ENCODE measurements at regions of chr16 and their contacts with region 1.

Region 1: DNA sequence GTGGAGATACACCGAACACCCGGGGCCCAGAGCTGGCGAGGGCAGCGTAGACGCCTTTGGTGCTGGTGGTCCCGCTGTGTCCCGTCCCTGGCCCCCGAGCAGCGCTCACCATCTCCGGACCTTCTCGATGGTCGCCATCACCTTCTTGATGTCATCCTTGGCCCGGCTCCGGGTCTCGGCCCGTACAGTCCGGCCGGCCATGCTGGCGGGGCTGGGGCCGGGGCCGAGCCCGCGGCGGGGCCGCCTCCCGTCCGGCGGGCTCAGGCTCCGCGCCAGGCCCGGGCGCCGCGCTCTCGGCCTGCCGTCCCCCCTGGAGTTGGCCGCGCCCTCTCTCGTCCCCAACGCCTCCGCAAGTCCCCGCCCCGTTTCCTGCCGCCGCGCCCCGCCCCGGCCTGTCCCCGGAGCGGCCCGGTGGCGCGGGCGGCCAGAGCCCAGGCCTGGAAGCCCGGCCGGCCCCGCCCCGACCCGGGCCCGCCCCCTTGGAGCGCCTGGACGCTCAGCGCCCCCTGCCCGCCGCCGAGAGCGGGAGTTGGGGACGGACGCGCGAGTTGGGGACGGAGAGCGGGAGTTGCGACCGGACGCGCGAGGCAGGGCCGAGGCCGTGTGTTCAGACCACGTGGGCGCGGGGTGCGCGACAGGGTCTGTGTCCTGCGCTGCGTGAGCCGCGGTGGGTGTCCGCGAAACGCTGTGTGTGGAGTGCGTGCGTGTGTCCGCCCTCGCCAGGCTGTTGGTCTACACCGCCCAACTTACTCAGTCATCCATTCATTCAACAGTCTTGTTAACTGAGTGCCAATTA is at the start of gene BCL7C:
- DNase-seq: peak; percentile 86
- ATAC-seq: peak; percentile 89
- H3K4me3 Mint-ChIP-seq: peak within 1 kb of the TSS; percentile 88
- H3K27ac Mint-ChIP-seq: peak within 1 kb of the TSS; percentile 85
- H3K4me1 Mint-ChIP-seq: peaks cover 42% of the 10 kb centered on the region
- H3K27me3 Mint-ChIP-seq: no peaks in the 10 kb centered on the region
- total RNA-seq, gene BCL7C: 30.3 to 34.5 TPM

Region 2: DNA sequence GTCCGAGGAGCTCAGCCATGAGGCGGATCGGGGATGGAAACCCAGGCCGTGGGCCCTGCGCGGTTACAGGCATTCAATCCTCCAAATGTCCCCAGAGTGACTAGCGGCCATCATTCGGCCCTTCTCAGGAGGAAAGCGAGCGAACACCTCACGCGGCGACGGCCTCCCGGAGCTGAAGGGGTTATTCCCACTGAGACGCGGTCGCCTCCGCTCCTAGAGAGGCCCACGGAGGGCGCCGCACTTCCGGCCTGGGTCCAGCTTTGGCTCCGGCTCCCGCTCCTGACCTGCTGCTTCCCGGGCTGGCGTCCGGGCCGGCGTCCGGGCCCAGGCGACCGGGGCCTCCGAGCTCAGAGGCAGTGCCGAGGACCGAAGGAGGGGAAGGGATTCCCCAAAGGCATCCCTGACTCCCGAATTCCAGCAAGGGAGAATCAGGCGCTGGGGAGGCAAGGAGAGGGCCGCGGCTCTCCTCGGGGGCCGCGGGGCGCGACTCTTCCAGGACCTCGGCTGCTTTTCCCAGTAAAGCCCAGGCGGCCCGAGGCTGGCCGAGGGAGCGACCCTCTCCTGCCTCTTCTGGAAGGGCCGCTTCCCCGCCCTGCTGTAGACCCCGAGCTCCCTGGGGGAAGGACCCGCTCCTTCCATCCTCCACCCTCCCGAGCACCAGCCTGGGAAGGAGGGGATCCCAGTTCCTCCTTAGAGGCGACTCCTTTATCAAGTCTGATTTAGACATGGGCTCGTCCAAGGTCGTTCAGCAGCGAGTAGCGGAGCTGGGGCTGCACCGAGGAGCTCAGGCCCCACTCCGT is 88.4 kb before region 1 on chr16:
- CTCF ChIA-PET with region 1: no interaction called
- POLR2A ChIA-PET with region 1: no interaction called
- DNase-seq: peak; percentile 34
- ATAC-seq: peak; percentile 71
- H3K4me3 Mint-ChIP-seq: peak overlapping the region; percentile 57
- H3K27ac Mint-ChIP-seq: peak overlapping the region; percentile 28
- H3K4me1 Mint-ChIP-seq: peaks cover 29% of the 10 kb centered on the region
- H3K27me3 Mint-ChIP-seq: peaks cover 9% of the 10 kb centered on the region

Region 3: GRCh38 chr16:30858829-30859423 is 35.0 kb before region 1 on chr16:
- CTCF ChIA-PET with region 1: no interaction called
- POLR2A ChIA-PET with region 1: no interaction called
- DNase-seq: no peak
- ATAC-seq: no peak
- H3K4me3 Mint-ChIP-seq: no peak overlapping the region
- H3K27ac Mint-ChIP-seq: no peak overlapping the region
- H3K4me1 Mint-ChIP-seq: peaks cover 3% of the 10 kb centered on the region
- H3K27me3 Mint-ChIP-seq: peaks cover 3% of the 10 kb centered on the region

Region 4: DNA sequence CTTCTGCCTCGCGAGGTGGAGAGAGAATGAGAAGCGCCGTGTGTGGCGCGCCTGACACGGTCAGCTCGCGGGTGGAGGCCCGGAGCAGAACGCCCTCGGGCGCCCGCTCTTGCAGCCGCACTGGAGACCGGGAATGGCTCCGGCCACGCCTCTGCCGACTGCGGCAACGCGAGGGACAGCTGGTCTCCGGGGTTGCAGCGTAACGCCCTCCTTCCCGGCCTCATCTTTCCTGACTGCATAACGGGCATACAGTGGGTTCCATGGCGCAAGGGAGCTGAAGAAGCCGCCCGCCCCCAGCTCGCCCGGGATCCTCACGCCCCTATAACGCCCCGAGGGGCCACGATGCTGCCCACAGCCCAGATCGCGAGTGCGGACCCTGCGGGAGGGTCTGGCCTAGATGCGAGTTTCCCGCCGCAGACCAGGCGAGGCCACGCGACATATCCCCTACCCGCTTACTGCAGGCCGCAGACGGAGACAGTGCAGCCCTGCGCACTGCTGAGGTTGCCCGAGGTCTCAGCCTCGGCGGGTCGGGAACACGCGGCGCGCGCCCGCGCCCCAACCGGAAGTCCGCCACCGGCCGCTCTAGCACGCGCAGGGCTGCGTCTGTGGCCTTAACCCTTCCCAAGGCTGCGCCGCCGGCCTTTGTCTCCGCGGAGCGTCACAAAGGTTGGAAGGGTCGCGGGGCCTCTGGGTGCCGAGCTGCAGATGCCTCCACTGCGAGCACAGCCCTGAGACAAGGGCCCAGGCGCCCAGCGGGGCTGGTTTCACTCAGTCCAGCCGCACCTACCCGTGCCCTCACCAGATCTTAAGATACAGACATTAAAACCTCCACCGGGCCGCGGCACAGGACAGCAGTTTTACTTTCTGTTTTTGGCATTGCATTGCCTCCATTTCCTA is 18.9 kb before region 1 on chr16:
- CTCF ChIA-PET with region 1: no interaction called
- POLR2A ChIA-PET with region 1: interaction called, 26 read pairs
- DNase-seq: peak; percentile 90
- ATAC-seq: peak; percentile 91
- H3K4me3 Mint-ChIP-seq: peak overlapping the region; percentile 94
- H3K27ac Mint-ChIP-seq: peak overlapping the region; percentile 86
- H3K4me1 Mint-ChIP-seq: peaks cover 33% of the 10 kb centered on the region
- H3K27me3 Mint-ChIP-seq: no peaks in the 10 kb centered on the region

Measured in activated CD8-positive, alpha-beta T cell treated with anti-CD3 and anti-CD28 coated beads, Interleukin-2, amount 10 ng/mL, durations not matched to agents 7 days and 5 days (primary cell).